Natural killer cell (primary cell): ENCODE measurements at regions of chr3 and their contacts with region 1.

Region 1: DNA sequence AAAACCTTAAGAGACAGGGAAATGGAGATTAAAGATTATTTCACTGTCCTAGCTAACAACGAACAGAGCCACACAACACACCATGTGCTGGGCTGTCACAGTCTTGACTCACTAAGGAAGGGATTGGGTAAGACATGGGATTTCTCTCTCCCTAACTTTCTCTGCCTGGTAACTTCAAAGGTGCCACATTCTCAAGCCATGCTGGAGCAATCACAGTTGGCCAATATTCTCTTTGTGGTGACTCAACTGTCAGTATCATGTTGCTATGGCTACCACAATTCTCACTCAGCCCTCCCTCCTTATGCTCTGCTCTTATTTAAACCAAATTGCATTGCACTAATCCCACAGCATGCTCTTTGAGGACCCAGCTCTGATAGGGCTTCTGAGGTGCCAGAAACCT is 74.0 kb downstream of the OXNAD1 start:
- DNase-seq: peak; percentile 33 to 68
- ATAC-seq: peak; percentile 78 to 82 (median 79)
- H3K4me3 ChIP-seq: no peak overlapping the region
- H3K4me3 Mint-ChIP-seq: peak overlapping the region; percentile 78
- H3K27ac ChIP-seq: peak overlapping the region; percentile 85
- H3K27ac Mint-ChIP-seq: peak overlapping the region; percentile 93
- H3K4me1 ChIP-seq: peaks cover 30% of the 10 kb centered on the region
- H3K4me1 Mint-ChIP-seq: peaks cover 61% of the 10 kb centered on the region in 2 donors
- H3K27me3 ChIP-seq: no peaks in the 10 kb centered on the region
- H3K27me3 Mint-ChIP-seq: no peaks in the 10 kb centered on the region
- CTCF ChIP-seq: no peak

Region 2: GRCh38 chr3:15974647-15975046 is 364.4 kb before region 1 on chr3:
- intact Hi-C with region 1: no loop called
- DNase-seq: no peak
- ATAC-seq: no peak
- H3K4me3 ChIP-seq: no peak overlapping the region
- H3K4me3 Mint-ChIP-seq: no peak overlapping the region
- H3K27ac ChIP-seq: no peak overlapping the region
- H3K27ac Mint-ChIP-seq: no peak overlapping the region
- H3K4me1 ChIP-seq: no peaks in the 10 kb centered on the region
- H3K4me1 Mint-ChIP-seq: no peaks in the 10 kb centered on the region
- H3K27me3 ChIP-seq: no peaks in the 10 kb centered on the region
- H3K27me3 Mint-ChIP-seq: peaks cover 6 to 18% of the 10 kb centered on the region in 2 donors
- CTCF ChIP-seq: peak; percentile 10

Region 3: GRCh38 chr3:16264708-16265454 is 74.1 kb before region 1 on chr3 and contains the starts of genes DPH3 and OXNAD1:
- intact Hi-C with region 1: no loop called
- DNase-seq: peak; percentile 99 to 100
- ATAC-seq: peak; percentile 92 to 98 (median 96)
- H3K4me3 ChIP-seq: peak within 1 kb of the TSS; percentile 99
- H3K4me3 Mint-ChIP-seq: peak within 1 kb of the TSS; percentile 96
- H3K27ac ChIP-seq: peak within 1 kb of the TSS; percentile 99
- H3K27ac Mint-ChIP-seq: peak within 1 kb of the TSS; percentile 89 to 95
- H3K4me1 ChIP-seq: peaks cover 11% of the 10 kb centered on the region
- H3K4me1 Mint-ChIP-seq: peaks cover 6 to 15% of the 10 kb centered on the region in 2 donors
- H3K27me3 ChIP-seq: no peaks in the 10 kb centered on the region
- H3K27me3 Mint-ChIP-seq: no peaks in the 10 kb centered on the region
- CTCF ChIP-seq: no peak
- total RNA-seq, gene DPH3: 20.4 to 27.3 (median 22.8) TPM
- total RNA-seq, gene OXNAD1: 16.7 to 26.1 (median 22.3) TPM

Region 4: DNA sequence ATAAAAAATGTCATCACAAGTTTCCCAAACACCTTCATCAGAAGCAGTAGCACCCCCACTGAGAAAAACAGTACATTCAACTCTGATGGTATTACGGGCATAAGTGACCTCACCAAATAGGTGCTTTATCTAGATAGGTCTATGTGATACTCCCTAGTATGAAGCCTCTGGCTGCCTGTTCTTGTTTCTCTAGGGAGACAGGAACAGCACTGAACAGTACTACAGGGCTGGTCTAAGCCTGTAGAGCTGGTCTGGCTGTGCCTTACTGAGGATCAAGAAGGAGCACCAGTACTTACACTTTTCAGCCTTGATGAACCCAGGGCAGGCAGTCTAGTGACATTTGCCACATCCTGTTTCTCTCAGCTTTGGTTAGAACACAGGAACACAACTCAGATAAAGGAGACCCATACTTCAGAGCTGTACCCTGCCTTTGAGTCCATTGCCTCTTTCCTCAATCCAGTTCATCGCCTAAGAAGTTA is 38.1 kb before region 1 on chr3:
- intact Hi-C with region 1: loop called (anchors 2 kb)
- DNase-seq: peak in 1 of 2 donors; percentile 86
- ATAC-seq: peak; percentile 73 to 90 (median 88)
- H3K4me3 ChIP-seq: peak overlapping the region; percentile 1
- H3K4me3 Mint-ChIP-seq: peak overlapping the region; percentile 96
- H3K27ac ChIP-seq: peak overlapping the region; percentile 83
- H3K27ac Mint-ChIP-seq: peak overlapping the region; percentile 95 to 98
- H3K4me1 ChIP-seq: peaks cover 50% of the 10 kb centered on the region
- H3K4me1 Mint-ChIP-seq: peaks cover 68 to 86% of the 10 kb centered on the region in 2 donors
- H3K27me3 ChIP-seq: no peaks in the 10 kb centered on the region
- H3K27me3 Mint-ChIP-seq: no peaks in the 10 kb centered on the region
- CTCF ChIP-seq: no peak

Region 5: DNA sequence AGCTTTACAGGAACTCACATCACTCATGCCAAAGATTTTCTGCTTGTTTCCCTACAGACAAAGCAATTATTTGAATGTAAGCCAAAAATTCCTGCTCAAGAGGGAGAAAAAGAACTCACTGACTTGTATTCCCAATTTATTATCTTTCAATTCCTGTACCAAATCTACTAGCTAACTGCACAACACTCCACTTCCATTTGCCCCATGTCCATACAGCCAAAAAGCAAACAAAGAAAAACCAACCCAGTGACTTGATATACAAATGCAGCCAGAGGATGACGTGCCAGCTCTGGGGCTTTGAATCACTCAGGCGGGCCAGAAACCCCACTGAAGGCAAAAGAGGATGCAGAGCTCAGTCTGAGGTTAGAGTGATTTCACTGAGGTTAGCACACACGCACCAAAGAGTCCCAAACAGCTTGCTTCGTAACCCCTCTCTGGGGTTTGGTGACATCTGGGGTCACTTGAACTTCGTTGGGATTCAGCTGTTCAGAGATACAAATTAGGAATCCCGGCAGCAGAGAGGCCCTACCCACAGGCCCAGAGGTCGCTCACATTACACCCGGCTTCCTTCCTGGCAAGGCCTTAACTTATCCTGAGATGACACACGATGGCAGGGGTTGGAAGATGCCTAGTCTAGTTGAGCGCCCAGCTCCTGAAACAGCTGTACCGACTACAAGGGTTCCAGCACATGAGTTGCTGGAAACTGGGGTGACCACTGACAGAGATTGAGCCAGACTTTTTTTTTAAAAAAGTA is 172.9 kb after region 1 on chr3:
- intact Hi-C with region 1: loop called (anchors 1 kb)
- DNase-seq: peak; percentile 66 to 94
- ATAC-seq: peak; percentile 50 to 76 (median 74)
- H3K4me3 ChIP-seq: peak overlapping the region; percentile 70
- H3K4me3 Mint-ChIP-seq: peak overlapping the region; percentile 97
- H3K27ac ChIP-seq: peak overlapping the region; percentile 92
- H3K27ac Mint-ChIP-seq: peak overlapping the region; percentile 91 to 97
- H3K4me1 ChIP-seq: peaks cover 74% of the 10 kb centered on the region
- H3K4me1 Mint-ChIP-seq: peaks cover 80 to 88% of the 10 kb centered on the region in 2 donors
- H3K27me3 ChIP-seq: no peaks in the 10 kb centered on the region
- H3K27me3 Mint-ChIP-seq: no peaks in the 10 kb centered on the region
- CTCF ChIP-seq: no peak

Region 6: DNA sequence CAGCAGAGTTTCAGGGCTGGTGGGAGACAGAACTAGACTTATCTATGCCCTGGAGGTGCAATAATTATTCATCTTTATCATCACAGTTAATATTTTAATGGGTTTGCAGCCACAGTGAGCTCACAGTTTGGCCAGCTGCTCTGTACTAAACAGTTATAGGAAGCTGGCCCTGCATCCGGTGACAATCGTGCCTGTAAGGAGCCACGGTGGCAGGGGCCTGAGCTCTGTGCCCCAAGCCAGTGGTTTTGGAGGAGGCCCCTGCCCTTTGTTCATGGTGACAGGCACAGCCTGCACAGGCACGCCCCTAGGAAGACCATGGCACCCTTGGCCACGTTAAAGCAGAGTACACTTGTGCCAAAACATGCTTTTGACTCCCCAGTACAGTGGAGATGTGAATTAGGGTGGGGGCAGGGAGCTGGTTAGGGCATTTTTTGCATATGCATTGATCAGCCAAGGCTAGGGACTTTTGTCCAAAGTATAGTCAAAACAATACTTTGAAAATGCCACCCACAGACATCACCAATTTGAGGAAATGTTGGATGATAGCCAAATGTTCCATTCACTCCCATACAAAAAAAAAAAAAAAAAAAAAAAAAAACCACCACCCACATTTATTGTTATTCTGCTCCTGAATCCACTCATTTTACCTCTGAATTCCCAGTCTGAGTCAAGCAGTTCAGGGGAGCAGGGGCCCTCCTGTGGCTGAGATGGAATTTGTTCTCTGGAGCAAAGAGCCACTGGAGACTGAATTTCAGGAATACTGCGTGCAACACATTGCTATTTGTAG is 177.9 kb after region 1 on chr3:
- intact Hi-C with region 1: loop called (anchors 1 kb)
- DNase-seq: peak; percentile 47 to 50
- ATAC-seq: peak; percentile 7 to 28 (median 19)
- H3K4me3 ChIP-seq: no peak overlapping the region
- H3K4me3 Mint-ChIP-seq: peak overlapping the region; percentile 97
- H3K27ac ChIP-seq: peak overlapping the region; percentile 80
- H3K27ac Mint-ChIP-seq: peak overlapping the region; percentile 91 to 97
- H3K4me1 ChIP-seq: peaks cover 54% of the 10 kb centered on the region
- H3K4me1 Mint-ChIP-seq: peaks cover 75 to 81% of the 10 kb centered on the region in 2 donors
- H3K27me3 ChIP-seq: no peaks in the 10 kb centered on the region
- H3K27me3 Mint-ChIP-seq: no peaks in the 10 kb centered on the region
- CTCF ChIP-seq: no peak

Region 7: DNA sequence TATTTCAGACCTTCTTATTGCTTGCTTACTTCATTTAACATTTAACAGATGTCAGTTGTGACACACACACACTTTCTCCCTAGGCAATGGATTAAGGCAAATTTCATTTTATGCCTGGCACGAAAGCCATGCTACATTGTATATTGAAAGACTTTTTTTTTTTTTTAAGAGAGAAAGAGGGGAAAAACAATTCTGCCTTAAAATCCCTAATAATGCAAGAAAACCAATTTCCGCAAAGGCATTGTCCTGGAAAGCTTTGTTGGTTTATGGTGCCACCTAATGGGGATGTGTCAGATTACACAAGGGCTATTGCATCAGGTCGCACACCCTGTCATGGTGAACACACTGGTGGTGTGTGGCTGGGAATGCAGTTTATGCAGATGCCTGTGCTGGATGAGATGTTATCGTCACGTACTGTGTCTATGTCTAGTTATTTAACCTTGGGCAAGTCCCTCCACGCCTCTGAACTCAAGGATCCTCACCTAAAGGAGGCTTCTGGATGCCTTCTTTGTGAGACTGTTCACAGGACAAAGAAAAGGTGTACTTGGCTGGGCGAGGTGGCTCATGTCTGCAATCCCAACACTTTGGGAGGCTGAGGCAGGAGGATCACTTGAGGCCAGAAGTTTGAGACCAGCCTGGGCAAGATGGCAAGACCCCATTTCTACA is 211.8 kb after region 1 on chr3:
- intact Hi-C with region 1: loop called (anchors 2 kb)
- DNase-seq: peak; percentile 56 to 91
- ATAC-seq: peak; percentile 86 to 90 (median 88)
- H3K4me3 ChIP-seq: no peak overlapping the region
- H3K4me3 Mint-ChIP-seq: peak overlapping the region; percentile 40
- H3K27ac ChIP-seq: no peak overlapping the region
- H3K27ac Mint-ChIP-seq: peak overlapping the region; percentile 31 to 69
- H3K4me1 ChIP-seq: peaks cover 17% of the 10 kb centered on the region
- H3K4me1 Mint-ChIP-seq: peaks cover 34 to 40% of the 10 kb centered on the region in 2 donors
- H3K27me3 ChIP-seq: no peaks in the 10 kb centered on the region
- H3K27me3 Mint-ChIP-seq: peaks cover 0 to 9% of the 10 kb centered on the region in 2 donors
- CTCF ChIP-seq: peak; percentile 93